Sigmoid colon (tissue), 7 donors: ENCODE measurements at regions of chr22 and their contacts with region 1.

Region 1: GRCh38 chr22:46576556-46577367 is 39.3 kb upstream of the CELSR1 start:
- DNase-seq: peak; percentile 71
- H3K4me3 ChIP-seq: peak overlapping the region; percentile 55 to 82 (median 75)
- H3K27ac ChIP-seq: peak overlapping the region; percentile 57 to 72 (median 68)
- H3K4me1 ChIP-seq: peaks cover 0 to 36% (median 27%) of the 10 kb centered on the region in 4 donors
- H3K27me3 ChIP-seq: no peaks in the 10 kb centered on the region
- CTCF ChIP-seq: no peak
- EP300 ChIP-seq: no peak
- POLR2A ChIP-seq: no peak

Region 2: GRCh38 chr22:46762238-46763050 is 185.7 kb after region 1 on chr22 and contains the start of gene TBC1D22A:
- intact Hi-C with region 1: loop called (anchors 2 kb)
- DNase-seq: peak; percentile 97
- H3K4me3 ChIP-seq: peak within 1 kb of the TSS; percentile 83 to 91 (median 88)
- H3K27ac ChIP-seq: peak within 1 kb of the TSS; percentile 92 to 96 (median 94)
- H3K4me1 ChIP-seq: peaks cover 0 to 24% (median 19%) of the 10 kb centered on the region in 4 donors
- H3K27me3 ChIP-seq: no peaks in the 10 kb centered on the region
- CTCF ChIP-seq: no peak
- EP300 ChIP-seq: peak in 1 of 4 donors; percentile 48
- POLR2A ChIP-seq: peak; percentile 97 to 98
- total RNA-seq, gene TBC1D22A: 13.6 to 14.3 (median 13.8) TPM